Activated CD4-positive, alpha-beta memory T cell treated with anti-CD3 and anti-CD28 coated beads for 36 hours (primary cell): ENCODE measurements at regions of chr5 and their contacts with region 1.

Region 1: DNA sequence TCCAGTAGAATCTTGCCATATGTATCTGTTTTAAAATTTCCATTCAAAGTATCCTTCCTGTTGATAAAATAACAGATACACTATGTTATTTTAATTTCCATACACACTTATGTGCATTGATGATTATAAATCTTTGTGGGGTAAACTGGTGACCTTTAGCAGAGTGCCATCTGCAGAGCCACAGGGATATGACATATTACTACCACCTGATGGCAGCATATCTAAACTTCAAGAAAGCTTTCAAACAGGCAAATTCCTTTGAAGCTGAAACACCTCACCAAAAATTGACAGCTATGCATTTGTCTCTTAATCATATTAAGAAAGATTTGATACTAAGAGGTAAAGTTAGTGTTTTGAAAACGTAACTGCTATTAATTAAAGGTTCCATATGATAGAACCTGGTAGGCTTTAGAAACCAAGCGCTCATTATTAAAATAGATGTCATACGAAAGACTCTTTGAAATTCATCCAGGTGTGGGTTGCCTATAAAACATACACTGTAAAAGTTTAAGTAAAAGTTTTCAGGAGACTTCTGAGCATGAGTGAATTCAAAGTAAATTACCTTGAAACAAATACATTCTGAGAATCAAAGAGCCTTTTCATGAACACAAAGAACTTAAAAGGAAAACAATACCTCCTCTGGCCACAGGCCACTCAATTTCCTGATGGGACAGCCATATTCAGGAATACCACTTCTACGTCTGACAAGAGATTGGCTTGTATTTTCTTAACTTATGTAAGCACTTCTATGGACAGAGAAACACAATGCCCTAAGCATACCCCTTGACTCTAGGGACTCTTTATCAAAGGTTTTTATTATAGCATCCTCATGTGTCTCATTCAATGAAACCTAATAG is 93.3 kb downstream of the KIAA0825 start:
- DNase-seq: peak; percentile 12
- H3K4me3 Mint-ChIP-seq: no peak overlapping the region
- H3K27ac Mint-ChIP-seq: no peak overlapping the region
- H3K4me1 Mint-ChIP-seq: no peaks in the 10 kb centered on the region
- H3K27me3 Mint-ChIP-seq: no peaks in the 10 kb centered on the region

Region 2: GRCh38 chr5:94618493-94619328 is 93.6 kb after region 1 on chr5 and contains the starts of genes KIAA0825 and SLF1:
- CTCF ChIA-PET with region 1: interaction called, 3 read pairs
- POLR2A ChIA-PET with region 1: no interaction called
- intact Hi-C with region 1: loop called (anchors 2 kb)
- DNase-seq: peak; percentile 94
- H3K4me3 Mint-ChIP-seq: peak within 1 kb of the TSS; percentile 94
- H3K27ac Mint-ChIP-seq: peak within 1 kb of the TSS; percentile 94
- H3K4me1 Mint-ChIP-seq: peaks cover 38% of the 10 kb centered on the region
- H3K27me3 Mint-ChIP-seq: no peaks in the 10 kb centered on the region
- total RNA-seq, gene KIAA0825: 0.68 to 0.69 TPM
- total RNA-seq, gene SLF1: 14.5 to 15.9 TPM

Region 3: DNA sequence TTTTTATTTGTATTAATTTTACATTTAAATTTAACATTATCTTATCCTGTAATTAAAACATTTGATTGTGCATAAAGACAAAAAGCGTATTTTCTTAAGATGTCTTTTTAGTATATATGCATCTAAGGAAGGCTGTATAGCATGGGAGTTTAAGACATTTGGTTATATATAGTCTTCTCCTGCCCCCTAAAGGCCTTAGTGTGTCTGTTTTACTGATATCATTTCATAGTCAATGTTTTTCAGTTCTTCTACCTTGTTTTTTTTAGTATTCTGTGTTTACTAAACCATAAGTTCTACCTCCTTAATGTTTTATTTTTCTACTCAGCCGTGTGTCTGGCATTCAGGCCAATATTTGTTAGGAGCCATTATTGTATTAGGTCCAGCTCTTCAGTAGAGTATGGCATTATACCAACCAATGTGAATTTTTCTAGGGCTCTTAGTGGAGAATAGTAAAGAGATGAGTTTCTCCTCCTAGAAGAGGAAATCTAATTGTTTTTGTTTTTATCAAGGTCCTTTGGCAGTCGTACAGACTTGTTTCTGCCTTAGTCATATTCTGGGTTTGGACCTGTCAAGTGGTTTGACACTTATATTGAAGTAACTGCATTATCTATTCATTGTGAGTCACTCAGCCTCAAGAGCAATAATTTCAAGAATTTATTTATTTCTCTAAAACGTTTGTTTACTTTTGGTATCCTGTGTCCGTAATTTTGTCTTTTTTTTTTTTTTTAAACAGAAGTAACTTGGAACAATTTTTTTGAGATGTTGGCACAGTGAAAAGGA is 168.2 kb after region 1 on chr5:
- CTCF ChIA-PET with region 1: interaction called, 11 read pairs
- POLR2A ChIA-PET with region 1: no interaction called
- intact Hi-C with region 1: loop called (anchors 2 kb)
- DNase-seq: no peak
- H3K4me3 Mint-ChIP-seq: no peak overlapping the region
- H3K27ac Mint-ChIP-seq: no peak overlapping the region
- H3K4me1 Mint-ChIP-seq: peaks cover 2% of the 10 kb centered on the region
- H3K27me3 Mint-ChIP-seq: no peaks in the 10 kb centered on the region

Region 4: DNA sequence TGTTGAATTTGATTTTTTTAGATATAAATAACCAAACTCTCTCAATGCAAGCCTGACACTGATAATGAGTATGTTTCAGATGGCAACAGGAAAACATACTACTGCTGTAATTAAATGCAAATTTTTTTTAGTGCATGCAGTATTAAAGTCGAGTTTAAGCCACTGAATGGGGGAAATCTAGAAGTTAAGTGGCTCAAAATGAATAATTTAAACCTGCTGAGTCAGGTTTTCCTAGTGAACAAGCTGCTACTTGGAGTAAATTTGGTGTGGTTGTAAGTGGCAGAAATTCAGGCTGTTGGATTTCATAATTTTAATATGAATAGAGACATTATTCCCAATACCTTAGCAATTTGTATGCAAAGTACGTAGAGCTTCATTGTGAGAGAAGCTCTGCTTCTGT is 215.2 kb after region 1 on chr5:
- CTCF ChIA-PET with region 1: interaction called, 55 read pairs
- POLR2A ChIA-PET with region 1: no interaction called
- intact Hi-C with region 1: loop called (anchors 1 kb)
- DNase-seq: no peak
- H3K4me3 Mint-ChIP-seq: no peak overlapping the region
- H3K27ac Mint-ChIP-seq: no peak overlapping the region
- H3K4me1 Mint-ChIP-seq: peaks cover 1% of the 10 kb centered on the region
- H3K27me3 Mint-ChIP-seq: no peaks in the 10 kb centered on the region

Region 5: GRCh38 chr5:94784536-94785510 is 259.8 kb after region 1 on chr5:
- CTCF ChIA-PET with region 1: no interaction called
- POLR2A ChIA-PET with region 1: no interaction called
- intact Hi-C with region 1: loop called (anchors 1 kb)
- DNase-seq: no peak
- H3K4me3 Mint-ChIP-seq: no peak overlapping the region
- H3K27ac Mint-ChIP-seq: no peak overlapping the region
- H3K4me1 Mint-ChIP-seq: no peaks in the 10 kb centered on the region
- H3K27me3 Mint-ChIP-seq: peaks cover 2% of the 10 kb centered on the region

Region 6: GRCh38 chr5:94849821-94850736 is 325.0 kb after region 1 on chr5:
- CTCF ChIA-PET with region 1: interaction called, 4 read pairs
- POLR2A ChIA-PET with region 1: no interaction called
- intact Hi-C with region 1: loop called (anchors 1 kb)
- DNase-seq: peak; percentile 17
- H3K4me3 Mint-ChIP-seq: no peak overlapping the region
- H3K27ac Mint-ChIP-seq: no peak overlapping the region
- H3K4me1 Mint-ChIP-seq: peaks cover 7% of the 10 kb centered on the region
- H3K27me3 Mint-ChIP-seq: peaks cover 1% of the 10 kb centered on the region

Region 7: GRCh38 chr5:94908889-94909480 is 383.9 kb after region 1 on chr5:
- CTCF ChIA-PET with region 1: interaction called, 5 read pairs
- POLR2A ChIA-PET with region 1: no interaction called
- intact Hi-C with region 1: loop called (anchors 1 kb)
- DNase-seq: no peak
- H3K4me3 Mint-ChIP-seq: no peak overlapping the region
- H3K27ac Mint-ChIP-seq: no peak overlapping the region
- H3K4me1 Mint-ChIP-seq: no peaks in the 10 kb centered on the region
- H3K27me3 Mint-ChIP-seq: peaks cover 5% of the 10 kb centered on the region